Activated T-helper 2 cell treated with anti-CD3 and anti-CD28 coated beads, Interferon-gamma antibody, Interleukin-2, Interleukin-4, amounts not matched to agents 10 μg/mL and 5 μg/mL and 100 μg/mL, durations not matched to agents 14 hours and 24 hours and 36 hours (primary cell): ENCODE measurements at regions of chr12 and their contacts with region 1.

Region 1: DNA sequence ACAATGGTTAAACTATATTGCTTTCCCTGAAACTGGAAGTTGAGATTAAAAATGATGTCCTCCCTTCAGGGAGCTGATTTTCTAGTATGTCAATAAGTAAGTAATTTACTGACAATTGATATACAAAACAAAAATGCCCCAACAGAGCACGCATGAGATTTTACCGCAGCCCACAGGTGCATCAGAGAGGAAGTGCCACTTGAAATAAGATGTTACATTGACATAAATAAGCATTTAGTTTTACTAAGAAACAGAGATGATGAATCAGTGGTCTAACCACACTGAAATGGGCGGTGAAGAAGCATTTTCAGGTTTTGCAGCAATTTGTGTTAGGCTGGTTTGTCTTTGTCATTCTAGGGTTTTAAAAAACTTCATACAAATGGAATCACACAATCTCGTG is 8.8 kb upstream of the CLECL1 start:
- DNase-seq: peak; percentile 80
- H3K4me3 Mint-ChIP-seq: peak overlapping the region; percentile 65
- H3K27ac Mint-ChIP-seq: peak overlapping the region; percentile 95
- H3K4me1 Mint-ChIP-seq: peaks cover 61% of the 10 kb centered on the region
- H3K27me3 Mint-ChIP-seq: peaks cover 1% of the 10 kb centered on the region

Region 2: GRCh38 chr12:9647825-9648700 is 93.7 kb before region 1 on chr12:
- intact Hi-C with region 1: loop called (anchors 2 kb)
- DNase-seq: peak; percentile 95
- H3K4me3 Mint-ChIP-seq: peak overlapping the region; percentile 94
- H3K27ac Mint-ChIP-seq: peak overlapping the region; percentile 96
- H3K4me1 Mint-ChIP-seq: peaks cover 46% of the 10 kb centered on the region
- H3K27me3 Mint-ChIP-seq: no peaks in the 10 kb centered on the region

Region 3: GRCh38 chr12:9707864-9708808 is 33.6 kb before region 1 on chr12:
- intact Hi-C with region 1: loop called (anchors 2 kb)
- DNase-seq: peak; percentile 50
- H3K4me3 Mint-ChIP-seq: peak overlapping the region; percentile 58
- H3K27ac Mint-ChIP-seq: peak overlapping the region; percentile 79
- H3K4me1 Mint-ChIP-seq: peaks cover 39% of the 10 kb centered on the region
- H3K27me3 Mint-ChIP-seq: no peaks in the 10 kb centered on the region

Region 4: GRCh38 chr12:9948606-9949296 is 207.0 kb after region 1 on chr12:
- intact Hi-C with region 1: loop called (anchors 2 kb)
- DNase-seq: no peak
- H3K4me3 Mint-ChIP-seq: peak overlapping the region; percentile 23
- H3K27ac Mint-ChIP-seq: peak overlapping the region; percentile 53
- H3K4me1 Mint-ChIP-seq: peaks cover 57% of the 10 kb centered on the region
- H3K27me3 Mint-ChIP-seq: no peaks in the 10 kb centered on the region

Region 5: GRCh38 chr12:10212201-10213131 is 470.7 kb after region 1 on chr12 and contains the start of gene GABARAPL1:
- intact Hi-C with region 1: loop called (anchors 5 kb)
- DNase-seq: peak; percentile 81
- H3K4me3 Mint-ChIP-seq: peak within 1 kb of the TSS; percentile 91
- H3K27ac Mint-ChIP-seq: peak within 1 kb of the TSS; percentile 93
- H3K4me1 Mint-ChIP-seq: peaks cover 30% of the 10 kb centered on the region
- H3K27me3 Mint-ChIP-seq: peaks cover 21% of the 10 kb centered on the region
- total RNA-seq, gene GABARAPL1: 4.0 and 5.2 TPM in 2 replicates